MCF 10A (cell line): ENCODE measurements at regions of chr10 and their contacts with region 1.

Region 1: GRCh38 chr10:90857635-90858460 is at the start of gene HTR7:
- DNase-seq: peak; percentile 46
- H3K4me3 Mint-ChIP-seq: peak within 1 kb of the TSS; percentile 89
- H3K27ac Mint-ChIP-seq: peak within 1 kb of the TSS; percentile 84
- H3K4me1 Mint-ChIP-seq: peaks cover 17% of the 10 kb centered on the region
- H3K27me3 Mint-ChIP-seq: no peaks in the 10 kb centered on the region
- CTCF ChIP-seq: peak; percentile 66
- total RNA-seq, gene HTR7: 14.1 and 15.3 TPM in 2 replicates

Region 2: GRCh38 chr10:90437452-90437851 is 420.4 kb before region 1 on chr10:
- CTCF ChIA-PET with region 1: interaction called, 4 read pairs
- POLR2A ChIA-PET with region 1: no interaction called
- intact Hi-C with region 1: loop called (anchors 10 kb)
- DNase-seq: no peak
- H3K4me3 Mint-ChIP-seq: no peak overlapping the region
- H3K27ac Mint-ChIP-seq: peak overlapping the region; percentile 60
- H3K4me1 Mint-ChIP-seq: peaks cover 4% of the 10 kb centered on the region
- H3K27me3 Mint-ChIP-seq: no peaks in the 10 kb centered on the region
- CTCF ChIP-seq: no peak

Region 3: GRCh38 chr10:90787393-90788198 is 70.3 kb before region 1 on chr10:
- CTCF ChIA-PET with region 1: interaction called, 15 read pairs
- POLR2A ChIA-PET with region 1: interaction called, 6 read pairs
- intact Hi-C with region 1: loop called (anchors 2 kb)
- DNase-seq: peak; percentile 59
- H3K4me3 Mint-ChIP-seq: no peak overlapping the region
- H3K27ac Mint-ChIP-seq: no peak overlapping the region
- H3K4me1 Mint-ChIP-seq: peaks cover 21% of the 10 kb centered on the region
- H3K27me3 Mint-ChIP-seq: no peaks in the 10 kb centered on the region
- CTCF ChIP-seq: peak; percentile 77

Region 4: GRCh38 chr10:90834326-90834725 is 23.5 kb before region 1 on chr10:
- CTCF ChIA-PET with region 1: interaction called, 3 read pairs
- POLR2A ChIA-PET with region 1: interaction called, 37 read pairs
- intact Hi-C with region 1: no loop called
- DNase-seq: peak; percentile 46
- H3K4me3 Mint-ChIP-seq: no peak overlapping the region
- H3K27ac Mint-ChIP-seq: peak overlapping the region; percentile 76
- H3K4me1 Mint-ChIP-seq: peaks cover 28% of the 10 kb centered on the region
- H3K27me3 Mint-ChIP-seq: no peaks in the 10 kb centered on the region
- CTCF ChIP-seq: no peak

Region 5: GRCh38 chr10:90871766-90872647 is 14.2 kb after region 1 on chr10 and contains the start of gene RPP30:
- CTCF ChIA-PET with region 1: interaction called, 5 read pairs
- POLR2A ChIA-PET with region 1: interaction called, 49 read pairs
- intact Hi-C with region 1: no loop called
- DNase-seq: peak; percentile 83
- H3K4me3 Mint-ChIP-seq: peak within 1 kb of the TSS; percentile 98
- H3K27ac Mint-ChIP-seq: peak within 1 kb of the TSS; percentile 91
- H3K4me1 Mint-ChIP-seq: peaks cover 24% of the 10 kb centered on the region
- H3K27me3 Mint-ChIP-seq: no peaks in the 10 kb centered on the region
- CTCF ChIP-seq: no peak
- total RNA-seq, gene RPP30: 39.9 and 41.8 TPM in 2 replicates